ENCODE measurements at regions of chr19 and their contacts with region 1.

Region 1: DNA sequence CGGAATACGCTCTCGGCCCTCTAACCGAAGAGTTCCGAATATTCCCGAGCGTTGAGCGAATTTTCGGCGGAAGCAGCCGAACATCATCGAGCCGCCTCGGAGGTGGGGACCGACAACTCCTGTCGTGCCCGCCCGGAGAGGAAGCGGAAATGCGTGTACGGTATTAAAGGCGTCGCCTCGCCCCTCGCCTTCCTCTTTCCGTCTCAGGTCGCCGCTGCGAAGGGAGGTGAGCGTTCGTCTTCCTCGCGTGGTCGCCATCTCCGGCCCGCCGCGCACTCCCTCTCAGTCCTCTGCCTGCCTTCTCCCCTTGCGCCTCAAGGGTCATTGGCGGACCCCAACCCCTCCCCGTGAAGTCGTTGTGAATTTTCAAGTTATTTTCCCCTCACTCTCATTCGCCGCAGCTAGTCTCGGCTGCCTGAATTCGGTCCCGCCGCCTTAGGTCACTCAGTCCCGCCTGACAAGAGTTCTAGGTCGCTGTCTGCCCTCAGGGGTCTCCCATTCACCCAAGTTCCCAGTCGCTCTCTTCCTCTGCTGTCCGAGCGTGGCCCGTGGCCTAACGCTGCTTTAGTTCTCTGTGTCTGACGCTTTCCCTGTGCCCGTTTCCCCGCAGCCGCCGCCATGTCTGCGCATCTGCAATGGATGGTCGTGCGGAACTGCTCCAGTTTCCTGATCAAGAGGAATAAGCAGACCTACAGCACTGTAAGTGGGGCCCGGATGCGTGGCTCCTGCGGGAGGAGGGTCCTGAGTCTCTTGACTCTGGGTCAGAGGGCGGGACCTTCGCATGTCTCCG is at the start of gene RPL28:
- DNase-seq: peak; percentile 96
- ATAC-seq: peak; percentile 74
- H3K4me3 Mint-ChIP-seq: peak within 1 kb of the TSS; percentile 100
- H3K27ac Mint-ChIP-seq: peak within 1 kb of the TSS; percentile 99
- H3K4me1 Mint-ChIP-seq: peaks cover 53% of the 10 kb centered on the region
- H3K27me3 Mint-ChIP-seq: no peaks in the 10 kb centered on the region
- total RNA-seq, gene RPL28: 3,030 to 3,043 TPM

Region 2: DNA sequence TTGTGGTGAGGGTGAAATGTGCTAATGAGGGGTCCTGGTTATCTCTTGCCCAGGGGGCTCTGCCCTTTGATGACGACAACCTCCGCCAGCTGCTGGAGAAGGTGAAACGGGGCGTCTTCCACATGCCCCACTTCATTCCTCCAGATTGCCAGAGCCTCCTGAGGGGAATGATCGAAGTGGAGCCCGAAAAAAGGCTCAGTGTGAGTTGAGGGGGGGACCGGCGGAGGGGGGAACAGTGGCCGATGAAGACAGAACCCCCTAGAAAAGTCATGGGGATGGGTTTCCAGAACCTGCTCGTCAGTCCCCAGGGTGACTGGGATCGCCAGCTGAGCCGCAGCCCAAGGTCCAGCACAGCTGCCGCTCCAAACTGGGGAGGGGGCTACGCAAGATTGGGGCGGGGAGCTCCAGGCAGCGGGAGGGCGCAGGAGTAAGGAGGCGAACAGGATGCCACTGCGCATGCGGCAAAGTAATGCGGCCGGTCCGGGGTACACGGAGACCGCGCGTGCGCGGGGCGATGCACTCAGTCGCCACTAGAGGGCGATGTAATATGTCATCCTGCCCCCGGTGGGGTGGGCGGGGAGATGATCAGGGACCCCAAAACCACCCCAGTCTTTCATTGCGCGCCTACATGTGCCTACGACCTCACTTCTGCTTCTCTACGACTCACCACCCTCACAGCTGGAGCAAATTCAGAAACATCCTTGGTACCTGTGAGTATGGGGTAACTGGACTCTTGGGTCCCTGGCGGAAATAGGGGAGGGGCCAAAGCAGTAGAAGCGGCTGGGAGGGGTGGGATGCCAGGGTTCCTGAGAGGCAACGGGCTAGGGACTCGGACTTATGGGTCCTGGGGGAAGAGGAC is 84.2 kb before region 1 on chr19:
- POLR2A ChIA-PET with region 1: interaction called, 28 read pairs
- DNase-seq: peak; percentile 98
- ATAC-seq: peak; percentile 91
- H3K4me3 Mint-ChIP-seq: peak overlapping the region; percentile 95
- H3K27ac Mint-ChIP-seq: peak overlapping the region; percentile 98
- H3K4me1 Mint-ChIP-seq: peaks cover 8% of the 10 kb centered on the region
- H3K27me3 Mint-ChIP-seq: peaks cover 3% of the 10 kb centered on the region

Region 3: DNA sequence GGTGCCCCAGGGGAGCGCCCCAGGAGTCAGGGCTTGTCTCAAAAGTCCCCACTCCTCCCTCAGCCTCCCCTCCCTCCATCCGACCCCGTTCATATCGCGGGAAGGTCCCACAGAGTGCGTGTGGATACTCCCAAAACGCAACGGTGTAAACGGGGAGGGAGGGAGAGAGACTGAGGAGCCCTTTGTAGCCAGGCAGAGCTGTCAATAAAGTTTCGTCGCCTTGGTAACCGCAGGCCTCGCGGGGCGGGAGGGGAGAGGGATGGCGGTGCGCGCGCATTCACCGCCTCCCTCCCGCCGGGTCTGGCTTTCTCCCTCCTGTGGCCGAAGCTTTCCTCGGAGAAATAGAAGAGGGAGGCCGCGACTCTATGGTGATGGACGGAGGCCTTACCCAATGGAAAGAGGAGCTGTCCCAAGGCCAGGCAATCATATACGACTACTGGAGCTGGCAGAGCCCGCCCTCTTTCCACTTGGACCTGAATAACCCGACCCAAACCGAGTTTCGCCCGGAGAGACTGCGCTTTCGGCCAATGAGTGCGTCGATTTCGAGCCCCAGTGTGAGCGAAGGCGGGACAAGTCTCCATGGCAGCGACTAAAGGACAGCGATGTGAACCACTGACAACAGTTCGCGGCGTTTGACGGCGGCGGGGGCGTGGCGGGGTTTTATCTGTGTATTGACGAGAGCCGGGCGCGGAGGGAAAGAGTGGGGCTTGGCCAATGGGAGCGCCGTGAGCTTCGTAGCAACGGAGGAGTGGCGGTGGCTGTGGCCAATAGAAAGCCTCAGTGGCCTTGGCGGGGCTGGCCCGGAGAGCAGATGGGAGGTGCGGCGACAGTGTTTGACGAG is 46.7 kb before region 1 on chr19 and contains the start of gene KMT5C:
- POLR2A ChIA-PET with region 1: interaction called, 28 read pairs
- DNase-seq: peak; percentile 99
- ATAC-seq: peak; percentile 87
- H3K4me3 Mint-ChIP-seq: peak within 1 kb of the TSS; percentile 97
- H3K27ac Mint-ChIP-seq: peak within 1 kb of the TSS; percentile 98
- H3K4me1 Mint-ChIP-seq: peaks cover 14% of the 10 kb centered on the region
- H3K27me3 Mint-ChIP-seq: peaks cover 16% of the 10 kb centered on the region
- total RNA-seq, gene KMT5C: 26.4 to 28.5 TPM

Region 4: GRCh38 chr19:55369671-55370304 is 16.1 kb before region 1 on chr19:
- POLR2A ChIA-PET with region 1: interaction called, 10 read pairs
- DNase-seq: no peak
- ATAC-seq: peak; percentile 27
- H3K4me3 Mint-ChIP-seq: peak overlapping the region; percentile 61
- H3K27ac Mint-ChIP-seq: no peak overlapping the region
- H3K4me1 Mint-ChIP-seq: peaks cover 5% of the 10 kb centered on the region
- H3K27me3 Mint-ChIP-seq: peaks cover 37% of the 10 kb centered on the region

Region 5: GRCh38 chr19:55398200-55398925 is 12.4 kb after region 1 on chr19:
- POLR2A ChIA-PET with region 1: interaction called, 211 read pairs
- DNase-seq: no peak
- ATAC-seq: no peak
- H3K4me3 Mint-ChIP-seq: no peak overlapping the region
- H3K27ac Mint-ChIP-seq: peak overlapping the region; percentile 37
- H3K4me1 Mint-ChIP-seq: peaks cover 14% of the 10 kb centered on the region
- H3K27me3 Mint-ChIP-seq: no peaks in the 10 kb centered on the region

Region 6: DNA sequence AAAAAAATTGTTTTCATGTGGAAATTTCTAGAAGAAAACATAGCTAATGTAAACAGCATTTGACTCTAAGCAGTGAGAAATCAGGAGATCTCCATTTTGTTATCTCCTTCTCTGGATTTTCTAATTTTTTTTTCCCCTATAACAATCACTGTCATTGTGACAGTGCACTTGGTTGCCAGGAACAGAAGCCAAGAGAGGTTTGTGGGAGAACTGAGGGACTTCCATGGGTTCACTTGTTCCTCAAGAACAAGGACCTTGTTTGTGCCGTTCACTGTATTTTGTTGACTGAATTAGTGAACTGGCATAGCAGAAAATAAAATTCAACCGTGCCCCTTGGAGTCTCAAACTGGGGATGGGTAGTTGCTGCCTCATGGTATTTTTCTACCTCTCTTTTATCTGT is 40.1 kb after region 1 on chr19:
- POLR2A ChIA-PET with region 1: no interaction called
- DNase-seq: no peak
- ATAC-seq: no peak
- H3K4me3 Mint-ChIP-seq: no peak overlapping the region
- H3K27ac Mint-ChIP-seq: no peak overlapping the region
- H3K4me1 Mint-ChIP-seq: peaks cover 7% of the 10 kb centered on the region
- H3K27me3 Mint-ChIP-seq: peaks cover 13% of the 10 kb centered on the region

Measured in activated naive CD8-positive, alpha-beta T cell treated with anti-CD3 and anti-CD28 coated beads, Interleukin-2, amount 10 ng/mL, durations not matched to agents 7 days and 5 days (primary cell).